ENCODE measurements at regions of chr2 and their contacts with region 1.

Region 1: DNA sequence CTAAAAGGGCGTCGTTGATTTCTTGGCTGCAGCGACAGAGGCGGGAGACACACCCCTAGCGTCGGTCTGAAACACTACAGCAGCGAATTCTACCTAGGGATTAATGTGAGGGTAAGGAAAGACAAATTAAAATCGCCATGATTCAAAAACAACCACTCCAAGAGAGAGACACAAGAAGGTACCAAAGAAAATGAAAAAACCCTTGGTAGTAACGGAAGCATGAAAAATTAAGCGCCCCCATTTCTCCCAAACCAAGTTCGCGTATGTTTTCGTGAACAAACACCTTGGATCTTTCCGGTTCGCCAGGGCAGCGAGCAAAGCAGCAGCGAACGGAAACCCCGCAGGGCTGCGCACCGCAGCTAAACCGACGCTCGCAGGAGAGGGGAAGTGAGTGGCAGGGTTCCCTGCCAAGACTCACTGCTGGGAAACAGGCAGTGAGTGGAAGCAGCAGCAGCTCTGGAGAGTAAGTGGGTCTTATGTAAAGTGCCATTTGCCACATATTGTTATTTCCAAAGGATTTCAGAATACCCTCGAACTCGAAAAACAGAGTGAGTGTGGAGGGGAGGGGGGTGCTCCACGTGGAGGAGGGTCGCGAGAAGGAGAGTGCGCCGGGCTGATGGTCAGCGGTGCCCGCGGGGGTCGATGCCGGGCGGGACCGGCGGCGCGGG is 1.0 kb downstream of the PPP3R1 start:
- DNase-seq: peak; percentile 75
- H3K4me3 Mint-ChIP-seq: peak overlapping the region; percentile 92
- H3K27ac Mint-ChIP-seq: peak overlapping the region; percentile 97
- H3K4me1 Mint-ChIP-seq: peaks cover 50% of the 10 kb centered on the region
- H3K27me3 Mint-ChIP-seq: peaks cover 6% of the 10 kb centered on the region

Region 2: GRCh38 chr2:68157402-68158133 is 93.8 kb before region 1 on chr2 and contains the start of gene PNO1:
- intact Hi-C with region 1: loop called (anchors 1 kb)
- DNase-seq: peak; percentile 96
- H3K4me3 Mint-ChIP-seq: peak within 1 kb of the TSS; percentile 90
- H3K27ac Mint-ChIP-seq: peak within 1 kb of the TSS; percentile 100
- H3K4me1 Mint-ChIP-seq: peaks cover 37% of the 10 kb centered on the region
- H3K27me3 Mint-ChIP-seq: no peaks in the 10 kb centered on the region
- total RNA-seq, gene PNO1: 31.3 and 33.4 TPM in 2 replicates

Region 3: DNA sequence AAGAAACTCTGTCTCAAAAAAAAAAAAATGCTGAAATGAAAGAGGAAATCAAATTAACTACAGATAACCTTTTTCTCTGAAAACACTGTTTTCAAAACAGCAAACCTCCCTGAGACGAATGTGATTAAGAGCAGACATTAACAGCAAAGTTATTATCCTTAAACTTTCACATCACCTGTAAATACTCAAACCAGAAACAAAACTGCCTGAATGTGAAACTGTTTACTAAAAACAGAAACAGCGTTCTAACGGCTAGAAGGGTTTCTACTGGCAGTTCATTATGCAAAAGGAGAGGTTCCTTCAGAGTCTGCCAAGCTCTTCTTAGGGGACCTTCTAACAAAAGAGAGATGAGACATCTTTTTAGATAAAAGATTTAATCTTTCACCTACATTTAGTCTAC is 47.7 kb before region 1 on chr2:
- intact Hi-C with region 1: loop called (anchors 1 kb)
- DNase-seq: no peak
- H3K4me3 Mint-ChIP-seq: peak overlapping the region; percentile 67
- H3K27ac Mint-ChIP-seq: peak overlapping the region; percentile 90
- H3K4me1 Mint-ChIP-seq: peaks cover 67% of the 10 kb centered on the region
- H3K27me3 Mint-ChIP-seq: no peaks in the 10 kb centered on the region

Region 4: GRCh38 chr2:68282811-68283418 is 31.6 kb after region 1 on chr2:
- intact Hi-C with region 1: loop called (anchors 1 kb)
- DNase-seq: no peak
- H3K4me3 Mint-ChIP-seq: no peak overlapping the region
- H3K27ac Mint-ChIP-seq: no peak overlapping the region
- H3K4me1 Mint-ChIP-seq: no peaks in the 10 kb centered on the region
- H3K27me3 Mint-ChIP-seq: peaks cover 45% of the 10 kb centered on the region

Region 5: GRCh38 chr2:68441179-68441993 is 190.1 kb after region 1 on chr2:
- intact Hi-C with region 1: loop called (anchors 1 kb)
- DNase-seq: peak; percentile 76
- H3K4me3 Mint-ChIP-seq: peak overlapping the region; percentile 55
- H3K27ac Mint-ChIP-seq: peak overlapping the region; percentile 88
- H3K4me1 Mint-ChIP-seq: peaks cover 31% of the 10 kb centered on the region
- H3K27me3 Mint-ChIP-seq: peaks cover 10% of the 10 kb centered on the region

Region 6: DNA sequence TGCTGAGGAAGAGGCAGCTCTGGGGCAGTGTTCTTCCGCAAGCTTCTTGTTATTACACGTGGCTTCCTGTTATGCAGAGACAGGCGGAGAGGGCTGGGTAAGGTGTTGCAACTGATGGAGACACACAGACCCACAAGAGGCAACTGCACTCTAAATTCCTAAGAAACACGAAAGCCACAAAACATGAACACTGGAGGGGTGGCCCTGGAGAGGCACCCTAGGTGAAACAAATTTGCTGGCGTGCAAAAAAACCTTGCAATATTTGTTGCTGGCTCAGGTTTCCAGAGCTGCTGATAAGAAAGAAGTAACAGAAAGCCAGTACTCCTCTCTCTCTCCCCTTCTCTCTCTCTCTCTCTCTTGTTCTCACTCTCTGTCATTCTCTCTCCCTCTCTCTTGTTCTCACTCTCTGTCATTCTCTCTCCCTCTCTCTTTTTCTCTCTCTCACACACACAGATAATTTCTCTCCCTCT is 515.1 kb after region 1 on chr2:
- intact Hi-C with region 1: loop called (anchors 10 kb)
- DNase-seq: peak; percentile 75
- H3K4me3 Mint-ChIP-seq: peak overlapping the region; percentile 65
- H3K27ac Mint-ChIP-seq: peak overlapping the region; percentile 92
- H3K4me1 Mint-ChIP-seq: peaks cover 96% of the 10 kb centered on the region
- H3K27me3 Mint-ChIP-seq: no peaks in the 10 kb centered on the region